Activated B cell treated with CpG ODN at 0.5 μM for 24 hours (primary cell): ENCODE measurements at regions of chr14 and their contacts with region 1.

Region 1: DNA sequence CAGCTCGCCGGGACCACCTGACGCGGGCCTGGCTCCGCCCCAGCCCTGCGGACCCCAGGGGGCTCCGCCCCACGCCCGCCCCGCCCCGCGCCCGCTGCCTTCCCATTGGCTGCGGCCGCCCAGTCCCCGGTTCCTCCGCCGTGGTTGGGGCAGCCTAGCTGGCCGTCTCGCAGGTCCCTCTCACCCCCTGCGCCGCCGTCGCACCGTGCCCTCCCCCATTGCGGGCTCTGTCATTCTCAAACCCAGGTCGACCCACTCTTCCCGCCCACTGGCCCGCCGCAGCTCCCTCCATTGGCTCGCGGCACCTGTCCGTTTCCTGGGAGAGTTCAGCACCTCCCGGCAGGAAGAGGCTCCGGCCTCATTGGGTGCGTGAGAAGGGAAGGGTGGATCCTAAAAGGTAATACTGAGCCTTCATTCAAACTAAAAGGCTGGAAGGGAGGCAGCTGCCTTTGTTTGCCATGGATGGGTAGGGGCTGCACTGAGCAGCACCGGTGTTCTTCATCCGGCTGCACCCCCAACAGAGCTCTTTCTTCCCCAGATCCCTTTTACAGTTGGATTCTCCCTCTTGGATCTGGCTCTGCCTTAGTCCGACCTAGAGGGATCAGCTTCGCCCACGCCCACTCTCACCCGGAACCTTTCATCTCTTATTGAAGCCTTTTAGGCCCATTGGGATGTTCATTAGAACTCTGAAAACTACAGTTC is 381 bp upstream of the MAP3K9 start:
- DNase-seq: peak; percentile 85
- ATAC-seq: peak; percentile 87
- H3K4me3 Mint-ChIP-seq: no peak overlapping the region
- H3K27ac Mint-ChIP-seq: peak overlapping the region; percentile 80
- H3K4me1 Mint-ChIP-seq: peaks cover 24% of the 10 kb centered on the region
- H3K27me3 Mint-ChIP-seq: no peaks in the 10 kb centered on the region
- CTCF ChIP-seq: no peak

Region 2: GRCh38 chr14:70186900-70187451 is 622.7 kb before region 1 on chr14:
- CTCF ChIA-PET with region 1: no interaction called
- POLR2A ChIA-PET with region 1: interaction called, 12 read pairs
- intact Hi-C with region 1: no loop called
- DNase-seq: no peak
- ATAC-seq: peak; percentile 20
- H3K4me3 Mint-ChIP-seq: peak overlapping the region; percentile 83
- H3K27ac Mint-ChIP-seq: no peak overlapping the region
- H3K4me1 Mint-ChIP-seq: peaks cover 27% of the 10 kb centered on the region
- H3K27me3 Mint-ChIP-seq: peaks cover 41% of the 10 kb centered on the region
- CTCF ChIP-seq: no peak

Region 3: GRCh38 chr14:70600382-70601157 is 209.1 kb before region 1 on chr14 and contains the start of gene MED6:
- CTCF ChIA-PET with region 1: no interaction called
- POLR2A ChIA-PET with region 1: interaction called, 8 read pairs
- intact Hi-C with region 1: loop called (anchors 2 kb)
- DNase-seq: peak; percentile 77
- ATAC-seq: peak; percentile 99
- H3K4me3 Mint-ChIP-seq: peak within 1 kb of the TSS; percentile 99
- H3K27ac Mint-ChIP-seq: peak within 1 kb of the TSS; percentile 94
- H3K4me1 Mint-ChIP-seq: peaks cover 43% of the 10 kb centered on the region
- H3K27me3 Mint-ChIP-seq: no peaks in the 10 kb centered on the region
- CTCF ChIP-seq: no peak
- total RNA-seq, gene MED6: 50.5 and 57.0 TPM in 2 replicates

Region 4: GRCh38 chr14:70665191-70665916 is 144.3 kb before region 1 on chr14:
- CTCF ChIA-PET with region 1: no interaction called
- POLR2A ChIA-PET with region 1: interaction called, 7 read pairs
- intact Hi-C with region 1: loop called (anchors 2 kb)
- DNase-seq: peak; percentile 40
- ATAC-seq: peak; percentile 62
- H3K4me3 Mint-ChIP-seq: peak overlapping the region; percentile 66
- H3K27ac Mint-ChIP-seq: peak overlapping the region; percentile 93
- H3K4me1 Mint-ChIP-seq: peaks cover 97% of the 10 kb centered on the region
- H3K27me3 Mint-ChIP-seq: no peaks in the 10 kb centered on the region
- CTCF ChIP-seq: no peak

Region 5: DNA sequence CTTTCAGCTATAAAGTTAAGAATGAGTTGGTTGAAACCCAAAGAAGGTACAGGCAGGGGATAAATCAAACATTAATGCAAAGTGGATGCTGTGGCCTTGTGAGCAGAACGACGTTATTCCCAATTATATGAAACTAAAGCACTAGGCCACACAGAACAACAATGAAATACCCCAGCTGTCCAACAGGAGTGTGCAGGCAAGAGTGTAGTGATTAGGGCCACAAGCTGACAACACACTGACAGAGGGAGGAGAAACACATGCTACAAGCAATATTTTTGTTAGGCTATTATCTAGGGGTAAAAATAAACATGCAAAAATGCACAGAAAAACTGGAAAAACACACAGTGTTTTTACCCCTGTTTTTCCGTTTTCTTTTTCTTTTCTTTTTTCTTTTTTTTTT is 15.4 kb before region 1 on chr14:
- CTCF ChIA-PET with region 1: no interaction called
- POLR2A ChIA-PET with region 1: no interaction called
- intact Hi-C with region 1: no loop called
- DNase-seq: no peak
- ATAC-seq: no peak
- H3K4me3 Mint-ChIP-seq: no peak overlapping the region
- H3K27ac Mint-ChIP-seq: no peak overlapping the region
- H3K4me1 Mint-ChIP-seq: no peaks in the 10 kb centered on the region
- H3K27me3 Mint-ChIP-seq: no peaks in the 10 kb centered on the region
- CTCF ChIP-seq: no peak